ENCODE measurements at regions of chr2 and their contacts with region 1.

Region 1: GRCh38 chr2:144332356-144333142 is 187.4 kb downstream of the ZEB2 start:
- DNase-seq: peak; percentile 74 to 99 (median 86)

Region 2: GRCh38 chr2:143936848-143937722 is 395.5 kb before region 1 on chr2:
- intact Hi-C with region 1: loop called (anchors 10 kb)
- DNase-seq: peak; percentile 23 to 94 (median 64)

Region 3: GRCh38 chr2:144374163-144374661 is 41.7 kb after region 1 on chr2:
- intact Hi-C with region 1: loop called (anchors 5 kb)
- DNase-seq: no peak

Region 4: DNA sequence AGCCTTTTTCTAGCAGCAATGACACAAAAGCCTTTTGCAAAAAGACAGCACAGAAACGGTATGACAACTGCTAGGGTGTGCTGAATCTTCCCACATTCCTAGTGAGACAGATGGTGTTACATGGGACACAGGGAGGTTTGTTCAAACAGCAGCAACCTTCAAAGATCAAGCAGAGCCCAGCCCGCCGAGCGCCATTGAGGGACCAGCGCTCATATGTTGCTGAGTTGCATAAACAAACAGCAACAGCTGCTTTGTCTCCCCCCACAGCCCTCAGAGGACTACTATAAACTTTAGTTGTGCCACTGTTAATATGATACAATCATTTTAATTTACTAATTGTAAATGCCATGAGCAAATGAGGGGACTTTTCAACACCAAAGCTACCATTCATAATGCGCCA is 69.7 kb after region 1 on chr2:
- intact Hi-C with region 1: loop called (anchors 10 kb)
- DNase-seq: peak in 9 of 10 donors; percentile 37 to 91 (median 56)

Region 5: GRCh38 chr2:144426981-144427479 is 94.5 kb after region 1 on chr2:
- intact Hi-C with region 1: no loop called
- DNase-seq: peak in 1 of 10 donors; percentile 62

Region 6: GRCh38 chr2:144461308-144461766 is 128.8 kb after region 1 on chr2:
- intact Hi-C with region 1: loop called (anchors 10 kb)
- DNase-seq: peak; percentile 41 to 95 (median 70)

Region 7: DNA sequence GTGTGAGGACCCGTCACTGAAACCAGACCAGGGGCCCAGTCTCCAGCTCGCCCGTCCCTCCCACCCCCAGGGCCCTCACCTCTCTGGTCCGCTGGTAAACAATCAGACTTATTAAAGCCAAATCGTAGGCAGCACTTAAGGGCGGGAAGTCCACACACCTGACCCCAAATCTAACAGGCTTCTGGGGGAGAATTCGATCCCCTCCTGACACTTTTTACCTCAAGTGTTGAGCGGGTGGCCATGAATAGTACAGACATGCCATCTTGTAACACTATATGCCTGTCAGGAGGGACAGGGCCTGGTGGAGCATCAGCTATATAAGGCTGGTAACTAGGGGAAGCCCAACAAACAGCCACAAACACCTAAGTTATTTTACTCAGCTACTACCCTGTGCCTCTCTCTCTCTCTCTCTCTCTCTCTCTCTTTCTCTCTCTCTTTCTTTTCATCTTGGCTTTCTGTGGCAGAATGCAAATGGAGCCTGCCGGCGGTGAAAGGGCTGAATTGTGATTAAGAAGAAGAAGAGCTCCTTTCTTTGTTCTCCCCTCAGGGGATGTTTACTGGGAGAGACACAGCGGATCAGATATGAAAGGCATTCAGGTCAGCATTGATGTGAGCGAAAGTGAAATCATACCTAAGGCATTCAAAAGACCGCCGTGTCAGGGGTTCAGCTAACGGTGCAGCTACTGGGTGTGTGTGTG is 177.9 kb after region 1 on chr2:
- intact Hi-C with region 1: loop called (anchors 5 kb)
- DNase-seq: peak in 2 of 10 donors; percentile 62 to 65